Panc1 (cell line): ENCODE measurements at regions of chr11 and their contacts with region 1.

Region 1: DNA sequence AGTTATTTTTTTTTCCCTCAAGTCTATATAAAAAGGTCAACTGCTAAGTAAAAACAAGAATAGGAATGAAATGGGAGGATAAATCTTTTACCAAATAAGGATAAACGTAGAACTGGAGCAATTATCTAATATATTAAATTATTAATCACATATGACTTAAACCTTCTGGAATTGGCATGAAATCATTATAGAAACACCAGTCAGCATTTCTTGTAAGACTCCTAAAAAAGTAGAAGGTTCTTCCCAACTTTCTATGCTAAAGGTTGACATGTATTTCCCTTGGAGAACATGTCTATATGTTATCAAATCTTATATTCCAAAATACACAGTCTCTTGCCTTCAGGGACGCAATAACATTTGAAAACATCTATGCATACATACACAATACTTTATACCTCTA is 143.2 kb downstream of the SBF2 start:
- DNase-seq: no peak
- ATAC-seq: no peak
- H3K4me3 ChIP-seq: no peak overlapping the region
- H3K27ac ChIP-seq: no peak overlapping the region
- H3K4me1 ChIP-seq: no peaks in the 10 kb centered on the region
- H3K27me3 ChIP-seq: no peaks in the 10 kb centered on the region
- CTCF ChIP-seq: no peak

Region 2: GRCh38 chr11:10322830-10323792 is 172.3 kb after region 1 on chr11:
- CTCF ChIA-PET with region 1: no interaction called
- POLR2A ChIA-PET with region 1: no interaction called
- in situ Hi-C with region 1: no loop called
- intact Hi-C with region 1: no loop called
- DNase-seq: peak; percentile 90
- ATAC-seq: peak; percentile 82
- H3K4me3 ChIP-seq: peak overlapping the region in 1 of 2 experiments; percentile 36; a peak in 2 of 4 replicates
- H3K27ac ChIP-seq: peak overlapping the region; percentile 90
- H3K4me1 ChIP-seq: peaks cover 83% of the 10 kb centered on the region
- H3K27me3 ChIP-seq: no peaks in the 10 kb centered on the region
- CTCF ChIP-seq: peak; percentile 83

Region 3: GRCh38 chr11:10338287-10338686 is 187.5 kb after region 1 on chr11:
- CTCF ChIA-PET with region 1: no interaction called
- POLR2A ChIA-PET with region 1: no interaction called
- in situ Hi-C with region 1: no loop called
- intact Hi-C with region 1: no loop called
- DNase-seq: no peak
- ATAC-seq: no peak
- H3K4me3 ChIP-seq: no peak overlapping the region
- H3K27ac ChIP-seq: no peak overlapping the region
- H3K4me1 ChIP-seq: no peaks in the 10 kb centered on the region
- H3K27me3 ChIP-seq: no peaks in the 10 kb centered on the region
- CTCF ChIP-seq: no peak

Region 4: GRCh38 chr11:10770626-10771254 is 619.9 kb after region 1 on chr11:
- CTCF ChIA-PET with region 1: interaction called, 10 read pairs
- POLR2A ChIA-PET with region 1: no interaction called
- in situ Hi-C with region 1: no loop called
- intact Hi-C with region 1: no loop called
- DNase-seq: peak; percentile 51
- ATAC-seq: peak; percentile 92
- H3K4me3 ChIP-seq: no peak overlapping the region
- H3K27ac ChIP-seq: no peak overlapping the region
- H3K4me1 ChIP-seq: no peaks in the 10 kb centered on the region
- H3K27me3 ChIP-seq: no peaks in the 10 kb centered on the region
- CTCF ChIP-seq: peak; percentile 96